ENCODE measurements at regions of chr10 and their contacts with region 1.

Region 1: DNA sequence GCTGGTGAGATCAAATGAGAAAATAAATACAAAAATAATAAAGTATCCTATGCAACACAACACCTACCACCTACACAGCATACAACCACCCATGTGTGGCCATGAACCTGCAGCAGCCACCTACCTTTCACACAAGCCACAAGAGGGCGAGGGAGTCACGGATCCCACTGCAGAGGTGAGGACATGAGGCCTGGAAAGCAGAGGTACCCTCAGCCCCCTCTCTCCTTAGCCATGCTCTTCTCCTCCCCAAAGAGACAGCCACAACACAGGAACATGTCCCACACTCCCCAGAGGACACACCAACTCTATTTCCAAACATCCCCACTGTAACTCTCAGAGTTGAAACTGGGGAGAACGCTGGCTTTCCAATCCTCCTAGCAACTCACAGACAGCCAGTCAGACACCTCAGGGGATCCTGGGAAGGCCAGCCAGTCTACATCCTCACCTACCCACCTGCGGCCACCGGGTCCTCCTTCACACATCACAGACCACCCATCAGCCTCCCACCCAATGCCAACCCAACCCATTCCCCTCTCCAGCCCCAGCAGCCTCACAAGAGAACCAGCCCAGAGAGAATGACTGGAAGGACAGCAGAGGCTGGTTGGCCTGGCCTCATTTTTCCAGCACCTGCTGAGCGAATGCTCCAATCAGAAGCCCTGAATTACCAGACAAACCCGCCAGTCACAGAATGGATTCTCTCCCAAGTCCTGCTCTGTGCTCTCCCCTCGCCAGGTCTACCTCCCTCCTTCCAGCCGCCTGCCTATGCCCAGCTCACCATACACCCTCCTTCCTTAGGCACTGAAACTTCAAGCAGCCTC is 18.4 kb downstream of the DLG5 start:
- DNase-seq: peak; percentile 65
- ATAC-seq: peak; percentile 82
- H3K4me3 ChIP-seq: no peak overlapping the region
- H3K27ac ChIP-seq: peak overlapping the region; percentile 86
- H3K4me1 ChIP-seq: peaks cover 94% of the 10 kb centered on the region
- H3K27me3 ChIP-seq: no peaks in the 10 kb centered on the region
- CTCF ChIP-seq: peak; percentile 79
- EP300 ChIP-seq: no peak
- POLR2A ChIP-seq: no peak
- RAD21 ChIP-seq: peak; percentile 76

Region 2: DNA sequence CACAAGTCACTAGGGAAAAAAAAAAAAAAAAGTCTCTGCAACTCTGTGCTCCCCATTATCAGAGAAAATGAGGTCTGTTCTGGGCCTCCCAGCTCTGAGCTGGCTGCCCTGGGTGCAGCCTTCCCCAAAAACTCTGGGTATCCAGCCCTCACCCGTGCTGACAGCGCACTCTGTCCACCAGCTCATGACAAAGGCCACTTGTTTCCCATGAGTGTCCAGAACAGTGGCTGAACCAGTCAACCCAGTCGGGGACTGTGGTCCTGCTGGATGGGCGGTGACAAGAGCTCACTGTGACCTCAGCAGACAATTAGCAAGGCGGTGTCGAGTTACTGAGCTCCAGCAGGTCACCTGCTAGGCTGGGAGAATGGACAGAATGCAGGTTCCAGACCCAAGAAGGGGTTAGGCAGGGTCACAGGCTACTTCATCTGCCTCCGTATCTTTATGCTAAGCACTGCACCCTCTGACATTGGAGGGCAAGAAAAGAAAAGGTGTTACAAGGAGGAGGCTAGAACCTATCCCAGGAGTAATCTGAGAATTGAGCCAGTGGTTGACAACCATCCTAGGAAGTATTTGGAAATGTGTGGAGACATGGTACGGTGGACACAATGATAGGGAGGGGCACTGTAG is 18.7 kb before region 1 on chr10:
- CTCF ChIA-PET with region 1: no interaction called
- POLR2A ChIA-PET with region 1: interaction called, 12 read pairs
- in situ Hi-C with region 1: no loop called
- intact Hi-C with region 1: no loop called
- DNase-seq: peak; percentile 93
- ATAC-seq: peak; percentile 92
- H3K4me3 ChIP-seq: peak overlapping the region; percentile 22 to 60 (median 44); a peak in 4 of 6 replicates
- H3K27ac ChIP-seq: peak overlapping the region; percentile 83
- H3K4me1 ChIP-seq: peaks cover 95% of the 10 kb centered on the region
- H3K27me3 ChIP-seq: no peaks in the 10 kb centered on the region
- CTCF ChIP-seq: peak; percentile 44
- EP300 ChIP-seq: no peak
- POLR2A ChIP-seq: peak; percentile 65 to 77; a peak in 3 of 4 replicates
- RAD21 ChIP-seq: peak; percentile 36; the same call in 1 of the 2 replicates

Region 3: GRCh38 chr10:77970869-77971803 is 63.0 kb after region 1 on chr10:
- CTCF ChIA-PET with region 1: interaction called, 3 read pairs
- POLR2A ChIA-PET with region 1: no interaction called
- in situ Hi-C with region 1: loop called (anchors 5 kb)
- intact Hi-C with region 1: loop called (anchors 5 kb)
- DNase-seq: peak; percentile 92
- ATAC-seq: peak; percentile 84
- H3K4me3 ChIP-seq: no peak overlapping the region; a peak in 1 of 6 replicates
- H3K27ac ChIP-seq: peak overlapping the region; percentile 62
- H3K4me1 ChIP-seq: peaks cover 78% of the 10 kb centered on the region
- H3K27me3 ChIP-seq: no peaks in the 10 kb centered on the region
- CTCF ChIP-seq: 0 out of 2 replicates have a peak, but pooled peaks have one; percentile 10
- EP300 ChIP-seq: peak in 1 of 2 experiments; percentile 84; a peak in 2 of 4 replicates
- POLR2A ChIP-seq: no peak
- RAD21 ChIP-seq: no peak

Region 4: GRCh38 chr10:77989081-77989724 is 81.1 kb after region 1 on chr10:
- CTCF ChIA-PET with region 1: no interaction called
- POLR2A ChIA-PET with region 1: interaction called, 6 read pairs
- in situ Hi-C with region 1: no loop called
- intact Hi-C with region 1: loop called (anchors 1 kb)
- DNase-seq: peak; percentile 94
- ATAC-seq: peak; percentile 99
- H3K4me3 ChIP-seq: peak overlapping the region in 1 of 3 experiments; percentile 17; a peak in 1 of 6 replicates
- H3K27ac ChIP-seq: peak overlapping the region; percentile 77
- H3K4me1 ChIP-seq: peaks cover 24% of the 10 kb centered on the region
- H3K27me3 ChIP-seq: no peaks in the 10 kb centered on the region
- CTCF ChIP-seq: 0 out of 2 replicates have a peak, but pooled peaks have one; percentile 12
- EP300 ChIP-seq: 0 out of 4 replicates have a peak, but pooled peaks of 1 of the 2 experiments have one; percentile 57
- POLR2A ChIP-seq: peak in 1 of 2 experiments; percentile 31; a peak in 1 of 4 replicates
- RAD21 ChIP-seq: peak; percentile 33; the same call in 1 of the 2 replicates

Region 5: GRCh38 chr10:78029269-78030226 is 121.4 kb after region 1 on chr10 and contains the start of gene POLR3A:
- CTCF ChIA-PET with region 1: no interaction called
- POLR2A ChIA-PET with region 1: interaction called, 3 read pairs
- in situ Hi-C with region 1: no loop called
- intact Hi-C with region 1: loop called (anchors 2 kb)
- DNase-seq: peak; percentile 93
- ATAC-seq: peak; percentile 82
- H3K4me3 ChIP-seq: peak within 1 kb of the TSS; percentile 80 to 95 (median 81)
- H3K27ac ChIP-seq: peak within 1 kb of the TSS; percentile 95
- H3K4me1 ChIP-seq: peaks cover 24% of the 10 kb centered on the region
- H3K27me3 ChIP-seq: no peaks in the 10 kb centered on the region; a peak in 2 of 5 replicates
- CTCF ChIP-seq: peak; percentile 73
- EP300 ChIP-seq: no peak
- POLR2A ChIP-seq: peak; percentile 73 to 81
- RAD21 ChIP-seq: no peak; the same call in 1 of the 2 replicates
- total RNA-seq, gene POLR3A: 19.2 and 26.3 TPM in 2 replicates